Panc1 (cell line): ENCODE measurements at regions of chr6 and their contacts with region 1.

Region 1: GRCh38 chr6:166907871-166908806 is 48.2 kb downstream of the RNASET2 start:
- DNase-seq: no peak
- ATAC-seq: no peak
- H3K4me3 ChIP-seq: no peak overlapping the region
- H3K27ac ChIP-seq: no peak overlapping the region
- H3K4me1 ChIP-seq: no peaks in the 10 kb centered on the region
- H3K27me3 ChIP-seq: peaks cover 4% of the 10 kb centered on the region; the same call in 1 of the 2 replicates
- CTCF ChIP-seq: no peak

Region 2: DNA sequence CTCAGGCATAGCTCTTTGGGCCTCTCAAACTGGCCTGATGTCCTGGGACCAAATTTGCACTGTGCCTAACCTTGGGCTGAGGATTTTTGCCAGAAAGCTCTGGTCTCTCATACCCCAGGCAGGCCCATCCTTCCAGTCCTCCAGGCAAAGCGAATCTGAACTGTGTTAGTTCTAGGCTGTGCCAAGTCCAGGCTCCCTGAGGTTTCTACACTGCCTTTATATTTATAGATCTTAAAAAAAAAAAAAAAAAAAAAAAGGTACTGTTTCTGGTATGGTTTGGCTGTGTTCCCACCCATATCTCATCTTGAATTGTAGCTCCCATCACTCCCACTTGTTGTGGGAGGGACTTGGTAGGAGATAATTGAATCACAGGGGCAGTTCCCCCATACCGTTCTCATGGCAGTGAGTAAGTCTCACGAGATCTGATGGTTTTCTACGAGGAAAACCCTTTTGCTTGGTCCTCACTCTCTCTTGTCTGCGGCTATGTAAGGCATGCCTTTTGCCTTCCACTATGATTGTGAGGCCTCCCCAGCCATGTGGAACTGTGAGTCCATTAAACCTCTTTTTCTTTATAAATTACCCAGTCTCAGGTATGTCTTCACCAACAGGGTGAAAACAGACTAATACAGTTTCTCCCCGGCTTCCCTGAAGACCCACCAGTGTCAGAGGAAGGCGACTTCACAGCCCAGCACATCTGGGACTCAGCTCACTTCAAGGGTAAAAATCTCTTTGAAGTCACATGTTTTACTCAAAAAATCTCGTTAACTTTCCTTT is 701.4 kb before region 1 on chr6:
- CTCF ChIA-PET with region 1: no interaction called
- POLR2A ChIA-PET with region 1: interaction called, 20 read pairs
- in situ Hi-C with region 1: no loop called
- intact Hi-C with region 1: no loop called
- DNase-seq: no peak
- ATAC-seq: no peak
- H3K4me3 ChIP-seq: no peak overlapping the region
- H3K27ac ChIP-seq: no peak overlapping the region
- H3K4me1 ChIP-seq: no peaks in the 10 kb centered on the region
- H3K27me3 ChIP-seq: peaks cover 3% of the 10 kb centered on the region; the same call in 1 of the 2 replicates
- CTCF ChIP-seq: no peak

Region 3: DNA sequence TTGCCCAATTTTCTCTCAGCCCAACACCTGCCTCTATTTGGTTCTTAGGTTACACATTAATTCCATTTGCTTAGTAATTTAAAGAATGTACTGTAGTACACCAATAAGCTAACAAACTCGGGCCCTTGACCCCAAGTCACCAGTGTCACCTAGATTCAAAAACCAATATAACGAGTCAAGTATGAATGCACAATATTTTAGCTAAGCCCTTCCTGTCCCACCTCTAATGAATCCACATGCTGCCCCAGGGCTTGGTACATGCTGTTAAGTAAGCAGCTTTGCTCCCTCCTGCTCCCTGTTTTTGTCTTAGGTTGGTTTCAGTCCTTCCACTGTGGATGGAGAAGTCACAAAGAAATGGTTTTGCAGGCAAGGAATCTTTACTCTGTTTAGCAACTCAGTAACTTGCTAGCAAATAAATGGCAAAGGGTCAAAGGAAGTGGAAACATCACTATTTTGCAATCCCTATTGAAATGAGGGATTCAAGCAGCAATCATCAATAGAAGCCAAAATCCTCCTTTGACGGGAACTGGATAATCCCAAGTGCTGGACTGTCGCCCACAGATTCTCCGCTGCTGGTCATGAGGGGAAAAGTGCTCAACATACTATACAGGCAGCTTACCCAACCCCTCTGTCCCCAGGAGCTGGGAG is 520.4 kb before region 1 on chr6:
- CTCF ChIA-PET with region 1: no interaction called
- POLR2A ChIA-PET with region 1: no interaction called
- in situ Hi-C with region 1: no loop called
- intact Hi-C with region 1: no loop called
- DNase-seq: no peak
- ATAC-seq: no peak
- H3K4me3 ChIP-seq: no peak overlapping the region
- H3K27ac ChIP-seq: no peak overlapping the region
- H3K4me1 ChIP-seq: no peaks in the 10 kb centered on the region
- H3K27me3 ChIP-seq: no peaks in the 10 kb centered on the region
- CTCF ChIP-seq: no peak